ENCODE measurements at regions of chr11 and their contacts with region 1.

Region 1: DNA sequence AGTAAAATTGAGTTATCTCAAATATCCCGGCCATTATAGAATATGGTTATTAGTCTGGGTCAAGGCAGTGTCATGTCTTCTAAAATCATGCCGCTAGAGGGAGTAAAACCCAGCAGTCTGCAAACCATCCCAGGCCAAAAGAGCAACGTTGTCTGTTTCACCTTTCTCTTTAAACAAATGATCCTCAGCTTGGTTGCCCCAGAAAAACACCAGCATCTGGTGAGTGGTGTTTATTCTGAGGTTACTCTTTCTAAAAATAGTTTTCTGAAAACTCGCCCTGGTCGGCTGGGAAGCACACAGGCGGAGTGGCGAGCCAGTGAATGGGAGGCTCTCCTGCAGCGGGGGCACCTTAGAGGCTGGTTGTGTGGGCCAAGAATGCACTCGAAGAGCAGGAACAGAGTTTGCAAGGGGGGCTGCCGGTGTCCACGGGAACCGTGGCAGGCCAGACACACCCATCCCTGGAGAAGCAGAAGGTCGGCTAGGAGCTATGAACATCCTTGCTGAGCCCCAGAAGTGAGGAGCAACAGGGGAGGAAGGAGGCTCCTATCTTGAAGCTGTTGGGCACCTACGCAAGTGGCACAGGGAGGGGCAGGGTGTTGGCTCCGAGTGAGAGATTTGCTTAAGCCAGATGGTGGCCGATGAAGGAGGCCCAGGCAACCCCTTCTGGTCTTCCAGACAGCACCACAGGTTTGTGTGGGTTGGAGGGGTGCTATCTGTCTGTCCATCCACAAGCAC is 297.1 kb downstream of the ETS1 start:
- DNase-seq: peak; percentile 80
- ATAC-seq: peak; percentile 54
- H3K4me3 Mint-ChIP-seq: peak overlapping the region; percentile 78
- H3K27ac Mint-ChIP-seq: peak overlapping the region; percentile 98
- H3K4me1 Mint-ChIP-seq: peaks cover 98% of the 10 kb centered on the region
- H3K27me3 Mint-ChIP-seq: no peaks in the 10 kb centered on the region

Region 2: GRCh38 chr11:128039140-128040021 is 250.9 kb before region 1 on chr11:
- CTCF ChIA-PET with region 1: interaction called, 4 read pairs
- POLR2A ChIA-PET with region 1: no interaction called
- intact Hi-C with region 1: loop called (anchors 2 to 5 kb)
- DNase-seq: peak; percentile 88
- ATAC-seq: peak; percentile 94
- H3K4me3 Mint-ChIP-seq: peak overlapping the region; percentile 31
- H3K27ac Mint-ChIP-seq: peak overlapping the region; percentile 85
- H3K4me1 Mint-ChIP-seq: peaks cover 39% of the 10 kb centered on the region
- H3K27me3 Mint-ChIP-seq: no peaks in the 10 kb centered on the region

Region 3: GRCh38 chr11:128226106-128226716 is 64.1 kb before region 1 on chr11:
- CTCF ChIA-PET with region 1: interaction called, 6 read pairs
- POLR2A ChIA-PET with region 1: interaction called, 12 read pairs
- intact Hi-C with region 1: loop called (anchors 1 kb)
- DNase-seq: peak; percentile 62
- ATAC-seq: peak; percentile 54
- H3K4me3 Mint-ChIP-seq: no peak overlapping the region
- H3K27ac Mint-ChIP-seq: peak overlapping the region; percentile 55
- H3K4me1 Mint-ChIP-seq: peaks cover 52% of the 10 kb centered on the region
- H3K27me3 Mint-ChIP-seq: no peaks in the 10 kb centered on the region

Region 4: GRCh38 chr11:128302425-128303186 is 12.3 kb after region 1 on chr11:
- CTCF ChIA-PET with region 1: interaction called, 56 read pairs
- POLR2A ChIA-PET with region 1: interaction called, 8 read pairs
- intact Hi-C with region 1: loop called (anchors 1 kb)
- DNase-seq: peak; percentile 76
- ATAC-seq: peak; percentile 88
- H3K4me3 Mint-ChIP-seq: peak overlapping the region; percentile 80
- H3K27ac Mint-ChIP-seq: peak overlapping the region; percentile 95
- H3K4me1 Mint-ChIP-seq: peaks cover 84% of the 10 kb centered on the region
- H3K27me3 Mint-ChIP-seq: no peaks in the 10 kb centered on the region

Region 5: GRCh38 chr11:128422576-128423370 is 132.5 kb after region 1 on chr11:
- CTCF ChIA-PET with region 1: interaction called, 11 read pairs
- POLR2A ChIA-PET with region 1: interaction called, 9 read pairs
- intact Hi-C with region 1: loop called (anchors 1 kb)
- DNase-seq: peak; percentile 97
- ATAC-seq: peak; percentile 94
- H3K4me3 Mint-ChIP-seq: peak overlapping the region; percentile 36
- H3K27ac Mint-ChIP-seq: peak overlapping the region; percentile 82
- H3K4me1 Mint-ChIP-seq: peaks cover 53% of the 10 kb centered on the region
- H3K27me3 Mint-ChIP-seq: no peaks in the 10 kb centered on the region

Region 6: GRCh38 chr11:128497061-128497775 is 206.9 kb after region 1 on chr11:
- CTCF ChIA-PET with region 1: interaction called, 17 read pairs
- POLR2A ChIA-PET with region 1: interaction called, 7 read pairs
- intact Hi-C with region 1: loop called in 1 of 2 experiments (anchors 1 kb)
- DNase-seq: peak; percentile 52
- ATAC-seq: peak; percentile 8
- H3K4me3 Mint-ChIP-seq: peak overlapping the region; percentile 70
- H3K27ac Mint-ChIP-seq: peak overlapping the region; percentile 99
- H3K4me1 Mint-ChIP-seq: peaks cover 95% of the 10 kb centered on the region
- H3K27me3 Mint-ChIP-seq: no peaks in the 10 kb centered on the region

Region 7: GRCh38 chr11:128582496-128583366 is 292.5 kb after region 1 on chr11:
- CTCF ChIA-PET with region 1: interaction called, 5 read pairs
- POLR2A ChIA-PET with region 1: no interaction called
- intact Hi-C with region 1: loop called in 1 of 2 experiments (anchors 1 kb)
- DNase-seq: peak; percentile 37
- ATAC-seq: no peak
- H3K4me3 Mint-ChIP-seq: peak overlapping the region; percentile 48
- H3K27ac Mint-ChIP-seq: peak overlapping the region; percentile 75
- H3K4me1 Mint-ChIP-seq: peaks cover 61% of the 10 kb centered on the region
- H3K27me3 Mint-ChIP-seq: peaks cover 2% of the 10 kb centered on the region

Measured in activated CD4-positive, alpha-beta T cell treated with anti-CD3 and anti-CD28 coated beads for 36 hours (primary cell).